ENCODE measurements at regions of chr21 and their contacts with region 1.

Region 1: GRCh38 chr21:17491716-17492414 is 21.0 kb upstream of the CXADR start:
- DNase-seq: peak; percentile 89
- H3K4me3 ChIP-seq: no peak overlapping the region
- H3K27ac ChIP-seq: peak overlapping the region; percentile 72
- H3K4me1 ChIP-seq: peaks cover 45% of the 10 kb centered on the region
- H3K27me3 ChIP-seq: no peaks in the 10 kb centered on the region
- CTCF ChIP-seq: no peak
- POLR2A ChIP-seq: no peak

Region 2: DNA sequence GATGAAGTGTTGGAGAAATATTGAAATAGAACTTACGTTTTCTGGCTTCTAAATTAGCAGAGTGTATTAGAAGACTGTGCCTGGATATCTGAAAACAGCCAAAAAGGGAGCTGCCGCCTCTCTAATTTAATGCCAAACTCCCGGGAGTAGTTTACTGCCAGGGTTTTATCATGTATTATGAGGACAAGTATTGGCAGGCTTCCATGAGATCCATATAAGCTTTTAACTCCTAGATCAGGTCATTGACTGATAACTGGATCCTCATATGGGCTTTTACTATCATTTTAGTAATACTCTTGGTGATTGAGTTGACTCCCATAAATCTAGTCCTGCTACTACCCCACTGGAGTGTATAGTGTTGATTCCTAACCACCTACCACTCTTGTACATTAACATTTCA is 157.4 kb before region 1 on chr21:
- CTCF ChIA-PET with region 1: no interaction called
- POLR2A ChIA-PET with region 1: no interaction called
- dilution Hi-C with region 1: no loop called
- intact Hi-C with region 1: no loop called
- DNase-seq: no peak
- H3K4me3 ChIP-seq: no peak overlapping the region
- H3K27ac ChIP-seq: no peak overlapping the region
- H3K4me1 ChIP-seq: no peaks in the 10 kb centered on the region
- H3K27me3 ChIP-seq: no peaks in the 10 kb centered on the region
- CTCF ChIP-seq: no peak
- POLR2A ChIP-seq: no peak

Region 3: GRCh38 chr21:17554679-17555465 is 63.0 kb after region 1 on chr21:
- CTCF ChIA-PET with region 1: interaction called, 11 read pairs
- POLR2A ChIA-PET with region 1: no interaction called
- dilution Hi-C with region 1: no loop called
- intact Hi-C with region 1: no loop called
- DNase-seq: peak; percentile 25
- H3K4me3 ChIP-seq: no peak overlapping the region
- H3K27ac ChIP-seq: no peak overlapping the region
- H3K4me1 ChIP-seq: no peaks in the 10 kb centered on the region
- H3K27me3 ChIP-seq: no peaks in the 10 kb centered on the region
- CTCF ChIP-seq: peak; percentile 23 to 30
- POLR2A ChIP-seq: no peak

Measured in endothelial cell of umbilical vein (primary cell).